RWPE1 (cell line): ENCODE measurements at regions of chr4 and their contacts with region 1.

Region 1: DNA sequence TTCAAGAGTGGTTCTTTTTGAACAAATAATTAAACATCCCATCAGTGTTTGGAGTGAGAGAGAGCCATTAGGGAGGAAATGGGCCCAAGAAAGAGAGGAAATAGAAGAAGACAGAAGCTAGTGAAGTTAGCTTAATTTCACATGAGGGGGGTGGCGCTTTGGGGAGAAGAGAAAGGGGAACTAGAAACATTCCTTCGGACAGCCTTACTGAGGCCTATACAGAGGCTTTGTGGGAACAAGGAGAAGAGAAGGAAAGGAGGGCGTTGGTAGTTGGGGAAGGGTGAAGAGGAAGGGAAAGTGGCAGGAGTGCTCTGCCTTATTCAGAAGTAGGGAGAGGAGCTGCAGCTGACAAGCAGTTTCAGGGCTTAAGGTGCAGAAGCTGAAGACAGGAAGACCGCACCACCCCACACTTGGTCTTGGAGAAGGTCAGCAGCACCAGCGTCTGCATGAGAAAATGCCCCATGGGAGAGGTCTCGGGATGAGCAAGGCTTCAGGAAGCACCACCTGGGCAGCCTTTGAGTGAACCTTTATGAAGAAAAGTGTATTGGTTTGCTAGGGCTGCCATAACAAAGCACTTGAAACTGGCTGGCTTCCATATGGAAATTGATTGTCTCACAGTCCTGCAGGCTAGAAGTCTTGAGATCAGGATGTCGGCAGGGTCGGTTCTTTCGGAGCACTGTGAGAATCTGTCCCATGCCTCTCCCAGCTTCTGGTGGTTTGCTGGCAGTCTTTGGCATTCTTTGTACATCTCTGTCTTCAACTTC is 85.1 kb downstream of the KIT start:
- DNase-seq: no peak
- H3K27ac ChIP-seq: no peak overlapping the region
- CTCF ChIP-seq: no peak

Region 2: DNA sequence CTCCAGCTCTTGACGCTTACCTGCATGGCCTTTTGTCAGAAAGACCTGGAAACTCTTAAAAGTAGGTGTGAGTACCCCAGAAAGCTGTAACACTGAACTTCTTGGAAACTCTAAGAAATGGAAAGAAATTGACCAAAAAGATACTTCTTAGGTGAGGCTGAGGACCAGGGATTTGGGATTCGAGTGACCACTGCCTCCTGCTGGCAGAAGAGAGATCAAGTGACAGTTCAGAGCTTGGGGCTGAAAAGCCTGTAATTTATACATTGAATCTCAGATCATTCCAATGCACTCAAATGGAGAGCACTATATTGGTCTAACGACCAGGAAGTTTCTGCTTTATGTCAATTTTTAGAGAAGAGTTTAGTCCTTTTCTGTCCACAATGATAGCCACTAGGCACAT is 309.1 kb before region 1 on chr4:
- CTCF ChIA-PET with region 1: no interaction called
- POLR2A ChIA-PET with region 1: no interaction called
- DNase-seq: no peak
- H3K27ac ChIP-seq: no peak overlapping the region
- CTCF ChIP-seq: no peak

Region 3: DNA sequence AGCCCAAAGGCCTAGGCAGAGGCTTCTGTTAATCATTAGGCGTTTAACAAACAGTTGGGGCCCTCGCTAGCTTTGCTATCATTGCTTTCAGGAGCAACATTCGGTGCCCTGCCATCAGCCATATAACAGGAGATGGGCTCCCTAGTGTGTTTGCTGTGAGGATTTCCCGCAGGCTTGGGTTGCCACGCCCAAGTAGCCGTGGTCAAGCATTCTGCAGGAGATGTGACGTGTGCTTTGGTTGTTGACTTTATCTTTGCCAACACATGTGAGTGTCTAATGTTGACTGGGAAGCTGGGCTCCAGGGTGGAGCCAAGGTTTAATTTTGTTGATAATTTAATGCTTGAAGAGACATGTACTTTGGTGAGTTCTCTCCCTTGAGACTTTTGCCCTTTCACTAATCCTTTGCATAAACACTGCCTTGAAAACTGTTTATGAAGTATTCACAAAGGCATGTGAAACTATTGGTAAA is 269.7 kb before region 1 on chr4:
- CTCF ChIA-PET with region 1: interaction called, 11 read pairs
- POLR2A ChIA-PET with region 1: no interaction called
- DNase-seq: no peak
- H3K27ac ChIP-seq: no peak overlapping the region
- CTCF ChIP-seq: no peak